IMR-90 (cell line): ENCODE measurements at regions of chr2 and their contacts with region 1.

Region 1: DNA sequence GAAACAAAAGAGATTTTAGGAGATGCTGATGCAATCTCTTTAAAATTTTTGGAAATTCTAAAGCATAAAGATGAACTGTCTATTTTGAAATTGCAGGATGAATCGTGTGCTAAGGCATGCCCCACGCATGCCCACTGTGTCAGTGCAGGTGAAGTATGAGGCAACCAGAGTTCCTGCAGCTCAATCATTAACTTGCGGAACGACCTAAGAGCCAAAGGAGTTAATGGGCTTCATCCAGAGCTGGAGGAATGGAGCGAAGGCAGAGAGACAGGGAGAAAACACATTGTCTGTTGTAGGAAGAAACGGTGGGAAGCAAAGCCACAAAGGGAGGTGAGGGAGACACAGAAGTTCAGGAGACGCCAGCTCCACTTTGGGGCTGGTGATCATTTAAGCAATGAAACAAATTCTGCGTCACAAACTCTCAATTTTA is 265.2 kb downstream of the CCDC85A start:
- DNase-seq: no peak
- ATAC-seq: no peak
- H3K4me3 ChIP-seq: no peak overlapping the region
- H3K27ac ChIP-seq: no peak overlapping the region
- H3K4me1 ChIP-seq: no peaks in the 10 kb centered on the region
- H3K27me3 ChIP-seq: no peaks in the 10 kb centered on the region
- CTCF ChIP-seq: no peak
- POLR2A ChIP-seq: no peak
- RAD21 ChIP-seq: no peak

Region 2: DNA sequence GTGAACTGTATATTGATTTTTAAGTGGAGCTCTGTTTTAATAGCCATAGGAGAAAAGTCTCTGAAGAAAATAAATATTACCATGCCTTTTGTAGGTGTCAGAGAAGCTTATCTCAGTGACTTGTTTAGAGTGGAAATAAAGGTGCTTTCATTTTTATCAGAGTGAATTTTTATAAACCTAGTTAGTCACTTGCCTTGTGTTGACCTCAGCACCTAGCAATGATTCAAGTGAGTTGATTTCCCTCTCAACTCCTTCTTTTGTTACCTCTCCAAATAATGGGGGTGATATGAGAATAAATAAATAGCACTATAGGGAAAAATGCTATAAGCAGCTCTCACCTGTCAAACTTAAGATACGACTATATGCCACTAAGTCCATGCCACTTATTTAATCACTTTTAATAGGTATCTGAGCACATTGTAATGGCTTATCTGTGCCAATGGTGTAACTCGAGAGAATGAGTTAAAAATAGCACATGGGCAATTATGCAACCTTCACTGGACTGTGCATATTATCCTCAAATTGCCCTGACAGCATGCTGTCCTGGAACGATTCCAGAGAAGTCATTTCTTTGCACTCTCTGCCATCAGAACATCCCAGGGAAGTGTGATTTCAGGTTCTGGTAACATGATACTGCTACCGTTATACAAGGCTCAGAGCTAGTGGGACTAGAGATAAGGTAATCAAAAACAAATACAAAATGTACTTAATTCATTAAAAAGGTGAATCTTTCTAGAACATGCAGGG is 25.6 kb after region 1 on chr2:
- CTCF ChIA-PET with region 1: no interaction called
- POLR2A ChIA-PET with region 1: no interaction called
- dilution Hi-C with region 1: no loop called
- in situ Hi-C with region 1: no loop called
- intact Hi-C with region 1: no loop called
- DNase-seq: no peak
- ATAC-seq: no peak
- H3K4me3 ChIP-seq: no peak overlapping the region
- H3K27ac ChIP-seq: no peak overlapping the region
- H3K4me1 ChIP-seq: no peaks in the 10 kb centered on the region
- H3K27me3 ChIP-seq: no peaks in the 10 kb centered on the region
- CTCF ChIP-seq: no peak
- POLR2A ChIP-seq: no peak
- RAD21 ChIP-seq: no peak

Region 3: DNA sequence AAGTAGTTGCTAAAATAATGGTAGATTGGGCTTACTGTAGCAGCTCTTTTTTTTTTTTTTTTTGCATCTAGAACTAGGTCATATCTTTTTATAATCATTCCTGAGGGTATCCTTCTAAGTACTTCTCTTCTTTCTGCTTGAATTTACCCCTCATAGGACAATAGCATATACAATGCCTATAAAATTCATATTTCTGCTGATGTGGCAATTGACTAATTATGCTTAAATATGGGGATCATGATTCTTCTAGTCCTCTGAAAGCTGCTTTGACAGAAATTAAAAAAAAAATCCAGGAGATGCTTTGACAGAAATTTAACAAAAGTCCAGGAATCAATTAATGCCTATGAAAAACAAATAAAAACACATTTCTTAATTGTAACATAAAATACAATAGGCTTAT is 93.2 kb after region 1 on chr2:
- CTCF ChIA-PET with region 1: no interaction called
- POLR2A ChIA-PET with region 1: interaction called, 19 read pairs
- dilution Hi-C with region 1: no loop called
- in situ Hi-C with region 1: no loop called
- intact Hi-C with region 1: no loop called
- DNase-seq: no peak
- ATAC-seq: no peak
- H3K4me3 ChIP-seq: no peak overlapping the region
- H3K27ac ChIP-seq: no peak overlapping the region
- H3K4me1 ChIP-seq: no peaks in the 10 kb centered on the region
- H3K27me3 ChIP-seq: no peaks in the 10 kb centered on the region
- CTCF ChIP-seq: no peak
- POLR2A ChIP-seq: no peak
- RAD21 ChIP-seq: no peak